ENCODE measurements at regions of chr6 and their contacts with region 1.

Region 1: DNA sequence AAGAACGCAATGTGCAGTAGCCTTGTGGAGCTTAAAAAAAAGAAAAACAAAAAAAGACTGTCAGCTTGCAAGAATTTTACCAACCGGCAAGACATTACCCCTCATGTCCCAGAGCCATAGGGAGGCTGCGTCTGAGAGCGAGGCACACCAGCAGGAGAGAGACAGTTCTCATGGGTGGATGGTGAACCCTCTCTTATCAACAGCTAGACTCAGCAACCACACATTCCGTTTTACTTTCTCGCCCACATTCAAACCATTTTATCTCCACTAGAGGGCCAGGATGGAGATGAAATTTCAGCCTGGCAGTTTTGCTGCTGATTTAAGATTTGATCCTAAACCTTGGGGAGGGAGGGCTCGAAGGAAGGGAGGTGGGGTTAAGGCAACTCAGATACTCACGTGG is 247.0 kb downstream of the ATXN1 start:
- DNase-seq: no peak
- ATAC-seq: peak; percentile 43
- H3K4me3 ChIP-seq: no peak overlapping the region
- H3K27ac ChIP-seq: no peak overlapping the region
- H3K4me1 ChIP-seq: peaks cover 7 to 11% of the 10 kb centered on the region in 2 donors
- H3K27me3 ChIP-seq: no peaks in the 10 kb centered on the region

Region 2: GRCh38 chr6:16338577-16339262 is 175.5 kb before region 1 on chr6:
- intact Hi-C with region 1: loop called (anchors 5 kb)
- DNase-seq: peak; percentile 85 to 89
- ATAC-seq: no peak
- H3K4me3 ChIP-seq: no peak overlapping the region
- H3K27ac ChIP-seq: no peak overlapping the region
- H3K4me1 ChIP-seq: peaks cover 0 to 6% of the 10 kb centered on the region in 2 donors
- H3K27me3 ChIP-seq: no peaks in the 10 kb centered on the region

Region 3: DNA sequence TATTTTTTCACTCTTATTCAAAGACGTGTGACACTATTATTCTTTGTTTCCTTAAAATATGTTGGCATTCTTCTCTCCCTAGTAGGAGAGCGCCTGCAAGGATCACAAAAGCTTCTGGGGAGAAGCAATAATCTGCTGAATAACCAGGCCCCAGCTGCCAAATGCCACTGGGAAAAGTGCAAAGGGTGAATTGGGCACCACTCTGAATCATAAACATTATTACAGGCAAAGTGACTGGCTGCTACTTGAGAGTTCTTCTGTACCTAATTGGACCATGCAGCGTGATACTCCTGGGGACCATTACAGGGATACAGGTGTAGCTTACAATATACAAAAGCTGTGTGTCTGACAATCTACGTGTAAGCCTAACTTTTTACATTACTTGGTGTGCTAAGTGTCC is 94.2 kb after region 1 on chr6:
- intact Hi-C with region 1: no loop called
- DNase-seq: no peak
- ATAC-seq: no peak
- H3K4me3 ChIP-seq: no peak overlapping the region
- H3K27ac ChIP-seq: no peak overlapping the region
- H3K4me1 ChIP-seq: no peaks in the 10 kb centered on the region
- H3K27me3 ChIP-seq: no peaks in the 10 kb centered on the region

Region 4: DNA sequence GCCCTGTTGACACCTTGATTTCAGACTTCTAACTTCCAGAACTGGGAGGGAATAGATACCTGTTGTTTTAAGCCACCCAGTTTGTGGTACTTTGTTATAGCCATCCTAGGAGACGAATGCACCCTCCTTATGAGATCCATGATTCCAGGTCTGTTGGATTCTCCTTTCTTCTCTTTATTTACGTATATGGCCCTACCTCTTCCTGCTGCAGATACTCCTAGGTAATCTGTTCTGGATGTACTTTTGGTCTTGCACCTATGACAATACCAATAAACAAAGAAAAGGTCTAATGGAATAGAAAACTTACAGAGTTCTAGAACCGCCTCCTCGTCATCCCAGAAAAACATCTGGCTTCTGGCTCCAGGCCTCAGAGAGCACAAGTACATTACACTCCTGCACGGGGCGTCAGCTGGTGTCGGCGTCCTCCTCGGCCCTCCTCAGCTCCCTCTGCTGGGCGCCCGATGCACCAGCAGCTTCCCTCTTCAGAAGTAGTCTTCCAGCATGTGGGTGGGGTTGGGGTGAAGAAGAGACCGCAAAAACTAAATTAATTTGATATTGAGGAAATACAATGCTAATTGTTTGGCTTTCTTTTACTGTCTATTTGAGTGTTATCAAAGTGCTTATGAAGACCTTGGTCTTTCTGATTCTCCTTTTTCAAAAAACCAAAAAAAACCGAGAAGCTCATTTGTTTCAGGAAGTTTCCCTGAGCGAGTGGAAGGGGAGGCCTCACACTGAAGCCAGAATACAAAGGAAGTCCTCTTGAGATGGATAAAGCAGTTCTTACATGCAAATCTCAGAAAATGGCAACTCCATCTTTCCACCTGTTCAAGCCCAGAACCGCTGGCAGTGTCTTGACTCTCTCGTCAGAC is 256.7 kb after region 1 on chr6:
- intact Hi-C with region 1: loop called in 1 of 2 experiments (anchors 5 kb)
- DNase-seq: peak; percentile 85 to 91
- ATAC-seq: peak; percentile 84
- H3K4me3 ChIP-seq: no peak overlapping the region
- H3K27ac ChIP-seq: peak overlapping the region in 1 of 2 donors; percentile 69
- H3K4me1 ChIP-seq: peaks cover 2 to 5% of the 10 kb centered on the region in 2 donors
- H3K27me3 ChIP-seq: no peaks in the 10 kb centered on the region

Region 5: GRCh38 chr6:16964553-16965501 is 450.6 kb after region 1 on chr6:
- intact Hi-C with region 1: loop called in 1 of 2 experiments (anchors 10 kb)
- DNase-seq: peak; percentile 73 to 87
- ATAC-seq: peak; percentile 87
- H3K4me3 ChIP-seq: no peak overlapping the region
- H3K27ac ChIP-seq: no peak overlapping the region
- H3K4me1 ChIP-seq: no peaks in the 10 kb centered on the region
- H3K27me3 ChIP-seq: peaks cover 0 to 2% of the 10 kb centered on the region in 2 donors

Region 6: GRCh38 chr6:17086469-17086868 is 572.2 kb after region 1 on chr6:
- intact Hi-C with region 1: loop called in 1 of 2 experiments (anchors 10 kb)
- DNase-seq: no peak
- ATAC-seq: peak; percentile 69
- H3K4me3 ChIP-seq: no peak overlapping the region
- H3K27ac ChIP-seq: no peak overlapping the region
- H3K4me1 ChIP-seq: no peaks in the 10 kb centered on the region
- H3K27me3 ChIP-seq: no peaks in the 10 kb centered on the region